Activated CD4-positive, alpha-beta T cell treated with anti-CD3 and anti-CD28 coated beads for 36 hours (primary cell): ENCODE measurements at regions of chr5 and their contacts with region 1.

Region 1: GRCh38 chr5:60944904-60945812 is at the starts of genes ERCC8 and NDUFAF2:
- DNase-seq: peak; percentile 92
- ATAC-seq: peak; percentile 99
- H3K4me3 Mint-ChIP-seq: no peak within 1 kb of the TSS
- H3K27ac Mint-ChIP-seq: peak within 1 kb of the TSS; percentile 84
- H3K4me1 Mint-ChIP-seq: peaks cover 23% of the 10 kb centered on the region
- H3K27me3 Mint-ChIP-seq: no peaks in the 10 kb centered on the region
- total RNA-seq, gene ERCC8: 9.0 to 12.5 TPM
- total RNA-seq, gene NDUFAF2: 39.3 to 46.6 TPM

Region 2: GRCh38 chr5:59810041-59810440 is 1135.1 kb before region 1 on chr5:
- CTCF ChIA-PET with region 1: no interaction called
- POLR2A ChIA-PET with region 1: no interaction called
- intact Hi-C with region 1: loop called in 1 of 2 experiments (anchors 10 kb)
- DNase-seq: peak; percentile 80
- ATAC-seq: peak; percentile 63
- H3K4me3 Mint-ChIP-seq: no peak overlapping the region
- H3K27ac Mint-ChIP-seq: no peak overlapping the region
- H3K4me1 Mint-ChIP-seq: peaks cover 4% of the 10 kb centered on the region
- H3K27me3 Mint-ChIP-seq: peaks cover 10% of the 10 kb centered on the region

Region 3: GRCh38 chr5:60699530-60700382 is 245.4 kb before region 1 on chr5 and contains the start of gene DEPDC1B:
- CTCF ChIA-PET with region 1: interaction called, 3 read pairs
- POLR2A ChIA-PET with region 1: interaction called, 4 read pairs
- intact Hi-C with region 1: loop called in 1 of 2 experiments (anchors 1 kb)
- DNase-seq: peak; percentile 94
- ATAC-seq: peak; percentile 97
- H3K4me3 Mint-ChIP-seq: peak within 1 kb of the TSS; percentile 84
- H3K27ac Mint-ChIP-seq: peak within 1 kb of the TSS; percentile 88
- H3K4me1 Mint-ChIP-seq: peaks cover 16% of the 10 kb centered on the region
- H3K27me3 Mint-ChIP-seq: peaks cover 2% of the 10 kb centered on the region
- total RNA-seq, gene DEPDC1B: 34.2 to 40.3 TPM

Region 4: GRCh38 chr5:60972231-60972630 is 27.1 kb after region 1 on chr5:
- CTCF ChIA-PET with region 1: no interaction called
- POLR2A ChIA-PET with region 1: no interaction called
- intact Hi-C with region 1: loop called in 1 of 2 experiments (anchors 1 kb)
- DNase-seq: peak; percentile 75
- ATAC-seq: peak; percentile 100
- H3K4me3 Mint-ChIP-seq: no peak overlapping the region
- H3K27ac Mint-ChIP-seq: peak overlapping the region; percentile 6
- H3K4me1 Mint-ChIP-seq: peaks cover 19% of the 10 kb centered on the region
- H3K27me3 Mint-ChIP-seq: no peaks in the 10 kb centered on the region

Region 5: GRCh38 chr5:61280205-61280604 is 335.0 kb after region 1 on chr5:
- CTCF ChIA-PET with region 1: no interaction called
- POLR2A ChIA-PET with region 1: no interaction called
- intact Hi-C with region 1: loop called in 1 of 2 experiments (anchors 10 kb)
- DNase-seq: peak; percentile 35
- ATAC-seq: peak; percentile 39
- H3K4me3 Mint-ChIP-seq: no peak overlapping the region
- H3K27ac Mint-ChIP-seq: no peak overlapping the region
- H3K4me1 Mint-ChIP-seq: peaks cover 41% of the 10 kb centered on the region
- H3K27me3 Mint-ChIP-seq: no peaks in the 10 kb centered on the region

Region 6: DNA sequence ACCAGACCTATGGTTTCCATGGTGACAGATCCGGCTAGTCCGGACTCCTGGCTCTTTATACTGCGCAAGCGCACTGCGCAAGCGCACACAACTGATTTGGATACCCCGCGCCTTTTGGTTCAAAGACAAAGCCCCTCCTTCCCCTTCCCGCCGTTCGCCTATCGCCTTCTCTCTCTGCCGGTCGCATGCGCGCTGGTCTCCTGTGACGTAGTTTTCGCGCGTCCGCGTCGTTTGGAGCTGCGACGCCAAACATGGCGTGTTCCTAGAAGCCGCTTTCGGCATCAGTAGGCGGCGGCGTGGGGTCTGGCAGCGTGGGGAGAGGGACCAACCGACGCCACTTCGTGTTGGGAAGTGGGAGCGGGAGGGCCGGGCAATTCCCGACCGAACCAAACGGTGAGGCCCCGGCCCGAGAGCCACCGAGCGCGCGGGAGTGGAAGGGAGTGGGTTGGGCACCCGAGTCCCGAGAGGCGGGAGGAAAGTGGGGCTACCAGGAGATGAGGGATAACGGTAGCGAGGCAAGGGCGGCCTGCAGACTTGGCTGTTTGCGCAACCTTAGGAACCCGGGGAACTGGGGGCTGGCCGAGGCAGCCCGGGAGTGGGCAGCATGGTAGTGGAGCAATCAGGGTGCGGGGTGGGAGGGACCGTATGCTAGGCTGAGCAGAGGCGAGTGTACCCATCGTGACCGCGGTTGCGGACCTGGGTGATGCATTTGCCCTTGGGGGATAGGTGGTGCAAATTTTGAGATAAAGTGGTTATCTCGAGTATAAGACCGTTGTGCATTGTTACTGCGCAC is 1467.6 kb after region 1 on chr5 and contains the start of gene IPO11:
- CTCF ChIA-PET with region 1: no interaction called
- POLR2A ChIA-PET with region 1: no interaction called
- intact Hi-C with region 1: loop called in 1 of 2 experiments (anchors 1 kb)
- DNase-seq: peak; percentile 99
- ATAC-seq: peak; percentile 99
- H3K4me3 Mint-ChIP-seq: peak within 1 kb of the TSS; percentile 90
- H3K27ac Mint-ChIP-seq: peak within 1 kb of the TSS; percentile 85
- H3K4me1 Mint-ChIP-seq: peaks cover 25% of the 10 kb centered on the region
- H3K27me3 Mint-ChIP-seq: no peaks in the 10 kb centered on the region
- total RNA-seq, gene IPO11: 57.2 to 69.9 TPM